Mucosa of descending colon (tissue), 3 donors: ENCODE measurements at regions of chr3 and their contacts with region 1.

Region 1: DNA sequence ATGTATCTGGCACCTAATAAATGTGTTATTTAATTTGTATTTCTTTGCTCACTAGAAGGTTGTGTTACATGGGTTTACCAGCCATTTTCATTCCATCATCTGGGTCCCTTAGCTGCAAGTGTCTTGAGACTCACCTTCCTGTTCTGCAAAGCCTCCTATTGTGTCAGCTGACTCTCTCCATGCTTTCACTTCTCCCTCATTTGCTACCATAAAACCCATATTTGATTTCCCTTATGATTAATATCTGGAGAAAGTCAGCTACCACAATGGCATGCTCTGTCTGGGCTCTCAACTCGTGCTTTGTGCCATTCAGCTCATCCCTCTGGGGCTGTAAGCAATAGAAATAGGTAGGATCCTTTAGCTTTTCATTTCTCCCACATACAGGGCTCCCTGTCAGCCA is 79.5 kb upstream of the EIF1B start:
- DNase-seq: peak in 1 of 3 donors; percentile 7
- ATAC-seq: peak; percentile 39
- H3K4me3 ChIP-seq: no peak overlapping the region
- H3K4me1 ChIP-seq: peaks cover 5% of the 10 kb centered on the region
- CTCF ChIP-seq: no peak

Region 2: GRCh38 chr3:40130721-40131120 is 99.2 kb before region 1 on chr3:
- intact Hi-C with region 1: no loop called
- DNase-seq: no peak
- ATAC-seq: no peak
- H3K4me3 ChIP-seq: no peak overlapping the region
- H3K4me1 ChIP-seq: no peaks in the 10 kb centered on the region
- CTCF ChIP-seq: no peak

Region 3: DNA sequence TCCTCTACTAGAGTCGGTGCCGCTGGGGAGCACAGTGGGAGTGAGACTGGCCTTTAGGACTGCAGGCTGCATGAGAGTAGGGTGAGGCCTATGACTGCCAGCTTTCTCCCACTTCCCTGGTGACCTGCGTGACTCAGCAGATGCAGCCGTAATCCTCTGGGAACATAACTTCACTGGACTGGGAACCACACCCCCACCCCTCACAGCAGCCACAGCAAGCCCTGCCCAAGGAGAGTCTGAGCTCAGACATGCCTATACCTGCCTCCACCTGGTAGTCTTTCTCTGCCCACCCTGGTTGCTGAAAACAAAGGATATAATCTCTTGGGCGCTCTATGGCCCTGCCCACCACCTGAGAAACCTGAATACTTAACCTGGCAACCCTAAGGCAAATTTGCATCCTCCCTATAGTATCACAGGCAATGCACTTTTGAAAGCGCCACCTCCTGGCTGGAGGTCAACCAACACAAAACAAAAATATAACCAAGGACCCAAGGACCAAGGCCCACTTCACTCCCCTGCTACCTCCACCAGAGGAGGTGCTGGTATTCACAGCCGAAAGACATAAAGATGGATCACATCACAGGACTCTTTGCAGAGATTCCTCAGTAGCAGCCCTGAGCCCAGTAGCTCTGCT is 1278.2 kb after region 1 on chr3:
- intact Hi-C with region 1: loop called in 1 of 2 experiments (anchors 5 kb)
- DNase-seq: no peak
- ATAC-seq: no peak
- H3K4me3 ChIP-seq: no peak overlapping the region
- H3K4me1 ChIP-seq: no peaks in the 10 kb centered on the region
- CTCF ChIP-seq: no peak